Vagina (tissue), 2 donors: ENCODE measurements at regions of chr20 and their contacts with region 1.

Region 1: GRCh38 chr20:10603971-10604864 is 69.6 kb downstream of the JAG1 start:
- DNase-seq: no peak
- H3K4me3 ChIP-seq: no peak overlapping the region
- H3K27ac ChIP-seq: peak overlapping the region; percentile 83
- H3K4me1 ChIP-seq: peaks cover 37% of the 10 kb centered on the region
- H3K27me3 ChIP-seq: no peaks in the 10 kb centered on the region
- CTCF ChIP-seq: no peak
- POLR2A ChIP-seq: no peak

Region 2: GRCh38 chr20:10553326-10553984 is 50.8 kb before region 1 on chr20:
- intact Hi-C with region 1: loop called (anchors 10 kb)
- DNase-seq: no peak
- H3K4me3 ChIP-seq: no peak overlapping the region
- H3K27ac ChIP-seq: no peak overlapping the region
- H3K4me1 ChIP-seq: peaks cover 39% of the 10 kb centered on the region
- H3K27me3 ChIP-seq: no peaks in the 10 kb centered on the region
- CTCF ChIP-seq: peak; percentile 22 to 86 (median 73)
- POLR2A ChIP-seq: no peak

Region 3: GRCh38 chr20:10581823-10582222 is 22.4 kb before region 1 on chr20:
- intact Hi-C with region 1: no loop called
- DNase-seq: no peak
- H3K4me3 ChIP-seq: no peak overlapping the region
- H3K27ac ChIP-seq: no peak overlapping the region
- H3K4me1 ChIP-seq: peaks cover 14% of the 10 kb centered on the region
- H3K27me3 ChIP-seq: no peaks in the 10 kb centered on the region
- CTCF ChIP-seq: no peak
- POLR2A ChIP-seq: no peak